ENCODE measurements at regions of chr5 and their contacts with region 1.

Region 1: GRCh38 chr5:56615361-56616153 is 199.8 kb upstream of the MAP3K1 start:
- DNase-seq: peak in 2 of 5 donors; percentile 38 to 54
- ATAC-seq: peak; percentile 32 to 78 (median 68)
- H3K4me3 ChIP-seq: no peak overlapping the region
- H3K27ac ChIP-seq: peak overlapping the region in 11 of 12 donors; percentile 18 to 61 (median 45)
- H3K4me1 ChIP-seq: peaks cover 3 to 28% (median 19%) of the 10 kb centered on the region in 12 donors
- H3K27me3 ChIP-seq: no peaks in the 10 kb centered on the region
- CTCF ChIP-seq: no peak
- POLR2A ChIP-seq: no peak

Region 2: GRCh38 chr5:56588636-56589480 is 26.7 kb before region 1 on chr5:
- intact Hi-C with region 1: loop called in 1 of 10 experiments (anchors 1 kb)
- DNase-seq: peak; percentile 61 to 86 (median 72)
- ATAC-seq: peak; percentile 23 to 71 (median 64)
- H3K4me3 ChIP-seq: no peak overlapping the region
- H3K27ac ChIP-seq: peak overlapping the region; percentile 1 to 84 (median 61)
- H3K4me1 ChIP-seq: peaks cover 4 to 52% (median 39%) of the 10 kb centered on the region in 12 donors
- H3K27me3 ChIP-seq: no peaks in the 10 kb centered on the region
- CTCF ChIP-seq: no peak
- POLR2A ChIP-seq: no peak

Region 3: DNA sequence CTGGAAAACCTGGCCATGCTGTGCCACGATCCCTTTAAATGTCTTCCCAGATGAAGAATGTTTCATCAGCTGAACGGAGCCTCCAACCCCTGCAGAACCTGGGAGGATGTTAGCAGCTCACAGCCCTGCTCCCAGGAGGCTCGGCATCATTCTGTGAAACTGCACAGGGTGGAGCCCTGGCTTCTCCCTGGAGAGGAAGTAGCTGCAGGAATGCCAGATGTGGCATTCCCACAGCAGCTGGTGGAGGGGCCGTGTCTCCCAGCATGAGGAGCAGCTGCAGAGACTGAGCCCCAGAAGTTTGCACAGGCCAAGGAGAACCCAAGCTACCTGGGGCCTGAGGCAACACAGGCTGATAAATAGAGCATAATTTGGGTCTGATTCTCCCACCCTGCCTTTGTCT is 34.0 kb after region 1 on chr5:
- intact Hi-C with region 1: no loop called
- DNase-seq: peak; percentile 23 to 70 (median 60)
- ATAC-seq: peak in 3 of 4 donors; percentile 70 to 77 (median 77)
- H3K4me3 ChIP-seq: no peak overlapping the region
- H3K27ac ChIP-seq: peak overlapping the region in 2 of 12 donors; percentile 11 to 37
- H3K4me1 ChIP-seq: peaks cover 0 to 24% (median 11%) of the 10 kb centered on the region in 12 donors
- H3K27me3 ChIP-seq: no peaks in the 10 kb centered on the region
- CTCF ChIP-seq: no peak
- POLR2A ChIP-seq: no peak

Region 4: GRCh38 chr5:56670118-56670483 is 54.5 kb after region 1 on chr5:
- intact Hi-C with region 1: no loop called
- DNase-seq: peak in 4 of 5 donors; percentile 46 to 61 (median 56)
- ATAC-seq: peak; percentile 61 to 89 (median 76)
- H3K4me3 ChIP-seq: no peak overlapping the region
- H3K27ac ChIP-seq: peak overlapping the region in 4 of 12 donors; percentile 16 to 90 (median 35)
- H3K4me1 ChIP-seq: peaks cover 0 to 70% (median 1%) of the 10 kb centered on the region in 12 donors
- H3K27me3 ChIP-seq: no peaks in the 10 kb centered on the region
- CTCF ChIP-seq: no peak
- POLR2A ChIP-seq: no peak

Region 5: GRCh38 chr5:56783261-56783660 is 167.7 kb after region 1 on chr5:
- intact Hi-C with region 1: loop called in 1 of 10 experiments (anchors 10 kb)
- DNase-seq: no peak
- ATAC-seq: no peak
- H3K4me3 ChIP-seq: no peak overlapping the region
- H3K27ac ChIP-seq: no peak overlapping the region
- H3K4me1 ChIP-seq: no peaks in the 10 kb centered on the region
- H3K27me3 ChIP-seq: no peaks in the 10 kb centered on the region
- CTCF ChIP-seq: no peak
- POLR2A ChIP-seq: no peak

Region 6: DNA sequence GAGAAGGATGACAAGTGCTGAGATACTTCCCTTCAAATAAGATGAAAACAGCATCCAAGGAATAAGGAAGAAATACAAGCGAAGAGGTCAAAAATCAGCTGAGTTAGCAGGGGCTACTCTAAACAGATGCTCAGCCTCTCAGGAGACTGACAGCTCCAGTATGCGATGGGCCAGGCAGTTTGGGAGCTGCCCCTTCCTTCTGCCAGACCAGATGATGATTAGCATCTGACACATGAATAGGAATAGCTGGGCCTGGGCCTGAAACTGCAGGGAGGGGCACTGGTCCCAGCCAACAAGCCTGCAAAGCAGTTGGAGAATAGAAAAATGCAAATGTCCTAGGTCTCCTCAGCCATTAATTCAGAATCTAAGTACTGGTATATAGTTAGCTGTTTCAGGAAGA is 186.6 kb after region 1 on chr5:
- intact Hi-C with region 1: loop called in 1 of 10 experiments (anchors 10 kb)
- DNase-seq: no peak
- ATAC-seq: no peak
- H3K4me3 ChIP-seq: no peak overlapping the region
- H3K27ac ChIP-seq: no peak overlapping the region
- H3K4me1 ChIP-seq: peaks cover 0 to 14% (median 9%) of the 10 kb centered on the region in 12 donors
- H3K27me3 ChIP-seq: no peaks in the 10 kb centered on the region
- CTCF ChIP-seq: no peak
- POLR2A ChIP-seq: no peak

Measured in heart left ventricle (tissue), 16 donors.